A673 (cell line): ENCODE measurements at regions of chr4 and their contacts with region 1.

Region 1: DNA sequence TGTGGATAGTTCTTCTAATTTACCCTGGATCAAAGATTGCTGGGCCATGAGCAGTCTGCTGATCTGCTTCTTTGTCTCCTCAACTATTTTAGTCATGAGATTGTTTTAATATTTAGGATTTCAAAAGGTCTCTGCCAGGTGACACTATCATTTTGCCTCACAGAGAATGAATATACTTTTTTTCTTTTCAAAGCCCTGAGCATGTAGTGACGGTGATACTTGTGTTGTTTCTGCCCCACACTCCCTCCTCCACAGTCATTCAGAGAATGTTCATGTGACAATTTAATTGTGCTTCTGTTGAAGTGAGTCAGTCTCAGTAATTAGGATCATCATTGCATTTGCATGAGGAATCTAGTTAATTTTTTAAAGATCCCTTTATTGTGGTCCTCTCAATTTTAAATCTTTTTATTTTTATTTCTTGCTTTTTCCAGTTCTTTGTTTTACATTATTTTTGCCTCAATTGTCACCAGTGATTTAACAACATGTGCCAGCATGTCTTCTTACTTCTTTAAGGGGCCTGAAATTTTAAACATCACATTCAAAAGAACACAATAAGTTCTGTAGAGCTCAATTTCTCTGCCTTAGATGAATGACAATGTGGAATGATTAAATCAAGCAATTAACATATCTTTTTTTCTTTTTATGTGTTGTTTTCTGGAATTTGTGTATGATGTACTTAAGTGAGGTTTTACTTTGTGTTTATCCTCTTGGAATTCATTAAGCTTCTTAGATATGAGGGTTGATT is 12.3 kb downstream of the MMRN1 start:
- DNase-seq: no peak
- H3K4me3 ChIP-seq: no peak overlapping the region
- H3K27ac ChIP-seq: no peak overlapping the region
- H3K4me1 ChIP-seq: no peaks in the 10 kb centered on the region
- H3K27me3 ChIP-seq: no peaks in the 10 kb centered on the region
- CTCF ChIP-seq: no peak

Region 2: GRCh38 chr4:89172860-89173259 is 734.1 kb before region 1 on chr4:
- CTCF ChIA-PET with region 1: no interaction called
- POLR2A ChIA-PET with region 1: no interaction called
- intact Hi-C with region 1: no loop called
- DNase-seq: no peak
- H3K4me3 ChIP-seq: no peak overlapping the region
- H3K27ac ChIP-seq: no peak overlapping the region
- H3K4me1 ChIP-seq: no peaks in the 10 kb centered on the region
- H3K27me3 ChIP-seq: no peaks in the 10 kb centered on the region
- CTCF ChIP-seq: no peak

Region 3: DNA sequence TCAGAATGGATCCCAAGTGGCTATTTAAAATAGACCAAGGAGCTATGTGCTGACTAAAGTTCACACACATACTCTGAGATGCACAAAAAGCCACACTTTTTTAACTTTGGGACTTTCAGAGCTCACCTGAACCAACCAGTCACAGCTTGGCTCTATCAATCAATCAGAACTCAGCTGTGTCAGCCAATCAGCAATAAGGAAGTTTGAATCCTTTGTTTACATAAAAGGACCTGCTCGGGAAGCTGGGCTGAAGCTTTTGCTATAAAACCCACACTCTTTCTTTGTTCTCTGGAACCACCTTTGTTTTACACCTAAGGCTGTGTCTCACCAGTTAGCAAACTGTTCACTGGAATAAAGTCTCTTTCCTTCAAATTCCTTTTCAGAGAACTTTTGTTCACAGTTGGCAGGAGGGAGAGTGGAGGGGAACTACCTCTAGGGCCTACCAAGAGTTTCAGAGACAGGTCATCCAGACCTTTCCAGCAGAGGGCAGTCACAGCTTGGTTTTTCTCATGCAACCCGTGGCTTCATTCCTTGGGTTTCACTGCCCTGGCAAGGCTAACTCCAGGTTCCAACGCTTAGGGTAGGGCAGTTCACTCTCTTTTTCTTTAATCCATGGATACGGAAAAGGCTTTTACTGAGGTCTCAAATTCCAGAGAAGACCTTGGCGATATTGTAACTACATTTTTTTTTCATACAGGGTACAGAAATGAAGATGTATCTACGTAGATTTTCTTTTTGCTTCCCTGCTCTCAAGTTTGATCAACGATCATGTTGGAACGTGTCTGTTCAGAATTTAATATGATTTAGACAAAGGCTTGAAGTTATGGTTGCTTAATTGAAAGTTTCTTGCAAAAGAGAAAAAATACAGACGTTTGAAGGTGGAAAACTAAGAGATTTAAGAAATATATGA is 680.0 kb before region 1 on chr4:
- CTCF ChIA-PET with region 1: no interaction called
- POLR2A ChIA-PET with region 1: no interaction called
- intact Hi-C with region 1: loop called (anchors 10 kb)
- DNase-seq: peak; percentile 59
- H3K4me3 ChIP-seq: no peak overlapping the region
- H3K27ac ChIP-seq: no peak overlapping the region
- H3K4me1 ChIP-seq: no peaks in the 10 kb centered on the region
- H3K27me3 ChIP-seq: no peaks in the 10 kb centered on the region
- CTCF ChIP-seq: peak; percentile 62

Region 4: DNA sequence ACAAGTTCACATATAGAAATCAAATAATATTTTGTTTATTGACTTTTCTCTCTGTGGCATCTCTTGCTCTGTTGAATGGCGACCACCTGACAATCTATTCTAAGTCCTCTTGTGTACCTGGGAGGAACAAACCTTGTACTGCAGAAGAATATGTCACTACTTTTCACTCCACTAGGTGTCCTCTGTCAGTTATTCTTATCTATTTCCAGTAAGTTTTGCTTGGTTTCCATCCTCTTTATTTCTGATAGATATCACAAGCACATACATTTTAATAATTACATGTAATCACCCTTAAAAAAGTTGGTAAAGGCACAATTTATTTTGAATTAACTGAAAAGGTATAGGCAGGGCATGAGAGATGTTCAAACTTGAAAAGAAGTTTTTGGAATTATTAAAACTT is 308.3 kb before region 1 on chr4:
- CTCF ChIA-PET with region 1: no interaction called
- POLR2A ChIA-PET with region 1: no interaction called
- intact Hi-C with region 1: loop called (anchors 10 kb)
- DNase-seq: no peak
- H3K4me3 ChIP-seq: no peak overlapping the region
- H3K27ac ChIP-seq: no peak overlapping the region
- H3K4me1 ChIP-seq: no peaks in the 10 kb centered on the region
- H3K27me3 ChIP-seq: no peaks in the 10 kb centered on the region
- CTCF ChIP-seq: peak; percentile 26; the same call in 1 of the 2 replicates

Region 5: DNA sequence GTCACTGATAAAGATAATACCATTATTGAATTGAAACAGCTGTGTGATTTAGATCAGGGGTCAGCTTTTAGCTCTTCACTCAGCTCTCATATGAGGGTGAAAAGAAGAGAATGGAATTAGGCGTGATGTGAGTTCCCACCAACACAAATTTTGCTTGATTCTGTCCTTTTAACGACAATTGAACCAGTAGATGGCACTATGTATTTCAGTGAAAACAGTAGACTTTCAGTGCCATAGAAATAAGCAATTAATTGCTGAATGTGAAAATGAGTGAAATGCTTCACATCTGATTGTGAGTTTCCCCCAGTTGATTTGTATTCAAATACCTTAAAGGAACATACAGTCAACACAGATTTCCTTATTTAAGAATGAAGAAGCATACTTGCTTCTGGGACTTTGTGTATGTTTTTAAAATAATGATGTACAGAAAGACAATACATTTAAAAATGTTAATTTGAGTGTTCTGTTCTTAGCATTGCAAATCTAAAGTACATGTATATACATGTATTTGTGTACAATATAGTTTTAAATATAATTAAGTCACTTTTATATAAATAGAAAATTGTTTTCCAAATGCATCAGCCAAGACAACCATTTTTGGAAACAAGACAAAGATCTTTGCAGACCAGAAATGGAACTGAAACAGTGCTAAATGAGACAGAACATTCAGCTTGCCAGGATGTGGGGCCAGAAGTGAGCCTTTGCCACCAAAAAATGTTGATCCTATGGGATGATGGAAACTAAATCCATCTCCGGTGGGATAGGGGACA is 248.8 kb before region 1 on chr4:
- CTCF ChIA-PET with region 1: no interaction called
- POLR2A ChIA-PET with region 1: no interaction called
- intact Hi-C with region 1: loop called (anchors 5 kb)
- DNase-seq: peak; percentile 10
- H3K4me3 ChIP-seq: no peak overlapping the region
- H3K27ac ChIP-seq: no peak overlapping the region
- H3K4me1 ChIP-seq: no peaks in the 10 kb centered on the region
- H3K27me3 ChIP-seq: no peaks in the 10 kb centered on the region
- CTCF ChIP-seq: peak; percentile 39; the same call in 1 of the 2 replicates

Region 6: GRCh38 chr4:90274175-90274574 is 367.2 kb after region 1 on chr4:
- CTCF ChIA-PET with region 1: no interaction called
- POLR2A ChIA-PET with region 1: no interaction called
- intact Hi-C with region 1: no loop called
- DNase-seq: no peak
- H3K4me3 ChIP-seq: no peak overlapping the region
- H3K27ac ChIP-seq: no peak overlapping the region
- H3K4me1 ChIP-seq: no peaks in the 10 kb centered on the region
- H3K27me3 ChIP-seq: no peaks in the 10 kb centered on the region
- CTCF ChIP-seq: no peak